Tibial artery (tissue), 4 donors: ENCODE measurements at regions of chr3 and their contacts with region 1.

Region 1: DNA sequence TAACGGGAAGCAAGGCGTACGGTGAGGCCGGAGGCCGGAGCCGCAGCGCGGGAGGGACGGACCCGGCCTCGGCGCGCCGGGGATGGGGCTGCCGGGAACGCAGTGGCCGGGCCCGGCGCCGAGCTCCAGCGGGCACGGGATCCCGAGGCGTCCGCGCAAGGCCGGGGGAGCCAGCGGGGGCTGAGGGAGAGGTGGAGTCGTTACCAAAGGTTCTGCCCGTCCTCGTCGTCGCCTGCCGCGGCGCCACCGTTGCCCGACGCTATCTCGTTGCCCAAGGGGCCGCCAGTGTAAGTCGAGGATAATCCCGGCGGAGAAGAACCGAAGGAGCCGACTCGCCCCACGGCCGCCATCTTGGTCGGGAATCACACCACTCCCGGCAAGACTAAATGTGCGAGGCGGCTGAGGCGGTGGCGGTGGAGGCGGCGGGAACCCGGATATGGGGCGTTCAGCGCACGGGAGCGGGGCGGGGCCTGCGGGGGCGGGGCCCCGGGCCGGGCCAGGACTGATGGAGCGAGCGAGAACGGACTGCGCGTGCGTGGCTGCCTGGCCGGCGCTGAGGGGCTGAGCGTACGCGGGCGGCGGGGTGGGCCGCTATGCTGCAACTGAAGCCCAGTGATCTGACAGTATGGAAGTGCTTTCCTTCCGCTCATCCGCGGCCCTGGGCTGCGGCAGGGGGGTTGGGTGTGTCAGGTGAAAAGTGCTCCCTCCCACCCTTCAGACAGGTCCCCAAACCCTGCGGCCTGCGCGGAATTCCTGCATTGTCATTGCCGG is at the start of gene DYNC1LI1:
- DNase-seq: peak; percentile 95 to 98
- H3K4me3 ChIP-seq: peak within 1 kb of the TSS; percentile 80 to 97
- H3K27ac ChIP-seq: peak within 1 kb of the TSS; percentile 98
- H3K4me1 ChIP-seq: peaks cover 0 to 33% (median 21%) of the 10 kb centered on the region in 4 donors
- H3K27me3 ChIP-seq: no peaks in the 10 kb centered on the region
- CTCF ChIP-seq: peak in 1 of 2 experiments; percentile 16

Region 2: DNA sequence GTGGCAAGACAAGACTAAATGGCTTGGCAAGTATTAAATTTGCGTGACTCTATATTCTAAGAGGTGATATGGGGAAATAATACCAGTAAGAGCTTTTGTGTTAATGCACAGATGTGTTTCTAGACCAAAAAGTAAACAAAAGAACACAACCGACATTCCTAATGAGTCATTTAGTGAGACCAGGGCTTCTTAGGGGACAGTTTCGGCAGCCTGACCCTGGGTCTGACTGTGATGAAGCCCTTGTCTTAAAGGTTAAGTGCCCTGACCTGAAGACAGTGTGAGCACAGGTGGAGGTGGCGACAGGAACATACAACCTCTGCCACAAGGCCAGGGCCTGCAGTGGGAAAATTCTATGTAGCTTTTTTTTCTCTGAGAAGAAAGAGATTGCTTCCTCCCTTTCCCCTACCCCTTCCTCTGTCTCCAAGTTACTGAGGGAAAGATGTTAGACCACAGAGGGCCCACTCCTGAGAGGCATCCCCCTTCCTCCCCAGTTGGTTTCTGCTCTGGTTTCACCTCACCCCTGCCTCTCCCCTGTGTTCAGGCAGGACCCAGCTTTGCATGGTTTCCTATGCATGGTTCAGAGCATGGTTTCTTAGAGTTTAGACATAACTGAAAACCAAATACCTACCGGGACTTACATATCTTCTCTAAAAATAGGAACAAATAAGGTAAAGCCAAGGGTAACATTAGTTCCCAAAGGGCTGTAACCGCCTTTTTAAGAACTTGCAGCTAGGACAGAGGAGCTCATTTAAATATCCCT is 203.8 kb before region 1 on chr3:
- intact Hi-C with region 1: no loop called
- DNase-seq: no peak
- H3K4me3 ChIP-seq: no peak overlapping the region
- H3K27ac ChIP-seq: no peak overlapping the region
- H3K4me1 ChIP-seq: no peaks in the 10 kb centered on the region
- H3K27me3 ChIP-seq: no peaks in the 10 kb centered on the region
- CTCF ChIP-seq: no peak

Region 3: DNA sequence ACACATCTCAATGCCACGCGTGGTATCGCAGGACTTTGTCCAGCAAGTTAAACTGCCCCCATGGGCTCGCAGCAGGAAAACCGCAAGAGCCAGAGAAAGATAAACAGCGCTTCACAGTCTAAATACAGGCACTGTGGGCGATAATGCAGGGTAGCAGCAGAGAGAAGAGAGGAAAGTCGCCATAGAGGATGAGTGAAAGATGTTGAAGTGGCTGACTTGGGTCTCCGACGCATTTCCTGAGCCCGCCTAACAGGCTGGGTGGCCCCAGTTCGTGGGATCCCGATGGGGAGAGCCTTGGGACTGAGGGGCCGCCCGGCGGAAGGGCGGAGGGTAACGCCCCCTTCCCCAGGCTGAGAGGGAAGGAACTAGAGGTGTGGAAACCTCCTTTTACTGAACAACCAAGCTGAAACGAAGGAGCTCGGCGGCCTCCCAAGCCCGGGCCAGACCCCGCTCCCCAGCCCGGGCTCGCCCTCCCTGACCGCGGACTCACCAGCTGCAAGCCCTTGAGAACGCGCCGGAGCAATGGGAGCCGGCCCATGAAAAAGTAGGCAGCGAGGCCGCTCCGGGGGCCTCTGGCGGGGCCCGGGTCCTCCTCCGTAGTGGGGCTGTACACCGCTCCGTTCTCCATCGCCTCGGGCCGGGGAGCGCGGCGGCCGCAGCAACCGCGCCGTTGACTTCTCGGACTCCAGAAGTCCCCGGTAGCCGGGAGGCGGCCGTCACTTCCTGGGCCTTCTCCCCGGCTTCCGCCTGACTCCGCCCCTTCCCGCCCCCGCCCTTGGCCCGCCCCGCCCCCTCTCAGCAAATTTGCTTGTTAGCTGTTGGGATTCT is 68.3 kb before region 1 on chr3 and contains the start of gene CMTM6:
- intact Hi-C with region 1: loop called (anchors 10 kb)
- DNase-seq: peak; percentile 77 to 90
- H3K4me3 ChIP-seq: peak within 1 kb of the TSS; percentile 95 to 99
- H3K27ac ChIP-seq: peak within 1 kb of the TSS; percentile 93 to 99
- H3K4me1 ChIP-seq: peaks cover 0 to 19% (median 8%) of the 10 kb centered on the region in 4 donors
- H3K27me3 ChIP-seq: no peaks in the 10 kb centered on the region
- CTCF ChIP-seq: no peak

Region 4: GRCh38 chr3:32684800-32685542 is 114.4 kb after region 1 on chr3 and contains the start of gene CNOT10:
- intact Hi-C with region 1: loop called (anchors 10 kb)
- DNase-seq: peak; percentile 93 to 96
- H3K4me3 ChIP-seq: peak within 1 kb of the TSS; percentile 69 to 94
- H3K27ac ChIP-seq: peak within 1 kb of the TSS; percentile 74 to 90
- H3K4me1 ChIP-seq: peaks cover 0 to 24% (median 14%) of the 10 kb centered on the region in 4 donors
- H3K27me3 ChIP-seq: no peaks in the 10 kb centered on the region
- CTCF ChIP-seq: peak in 1 of 2 experiments; percentile 36

Region 5: GRCh38 chr3:33074217-33075067 is 503.8 kb after region 1 on chr3:
- intact Hi-C with region 1: loop called (anchors 10 kb)
- DNase-seq: peak in 1 of 2 donors; percentile 46
- H3K4me3 ChIP-seq: no peak overlapping the region
- H3K27ac ChIP-seq: no peak overlapping the region
- H3K4me1 ChIP-seq: peaks cover 0 to 8% (median 2%) of the 10 kb centered on the region in 4 donors
- H3K27me3 ChIP-seq: no peaks in the 10 kb centered on the region
- CTCF ChIP-seq: peak; percentile 63 to 72